Activated CD4-positive, alpha-beta T cell treated with anti-CD3 and anti-CD28 coated beads, Interleukin-2, amount 10 ng/mL, durations not matched to agents 24 days and 14 days (primary cell): ENCODE measurements at regions of chr4 and their contacts with region 1.

Region 1: GRCh38 chr4:147984065-147984777 is 252.3 kb downstream of the ARHGAP10 start:
- DNase-seq: peak; percentile 75
- H3K4me3 Mint-ChIP-seq: no peak overlapping the region
- H3K27ac Mint-ChIP-seq: no peak overlapping the region
- H3K4me1 Mint-ChIP-seq: peaks cover 10% of the 10 kb centered on the region
- H3K27me3 Mint-ChIP-seq: peaks cover 1% of the 10 kb centered on the region

Region 2: DNA sequence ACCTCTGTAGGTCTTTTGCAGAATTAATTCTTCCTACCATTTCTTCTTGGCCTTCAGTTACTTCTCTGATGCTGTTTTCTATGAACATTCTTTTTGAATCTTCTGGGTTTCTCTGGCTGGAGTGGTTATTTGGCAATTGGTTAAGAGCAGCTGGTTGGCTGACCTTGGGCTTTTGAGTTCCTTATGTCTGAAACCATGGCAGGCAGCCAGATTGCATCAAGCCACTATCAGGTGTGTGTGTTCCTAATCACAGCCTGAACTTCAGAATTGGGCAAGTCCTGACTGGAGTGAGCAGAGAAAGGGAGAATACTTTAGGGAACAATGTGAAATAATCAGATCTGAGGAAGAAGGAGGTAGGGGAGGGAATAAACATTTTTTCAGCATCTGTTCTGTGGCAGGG is 162.1 kb before region 1 on chr4:
- intact Hi-C with region 1: no loop called
- DNase-seq: no peak
- H3K4me3 Mint-ChIP-seq: no peak overlapping the region
- H3K27ac Mint-ChIP-seq: no peak overlapping the region
- H3K4me1 Mint-ChIP-seq: peaks cover 2% of the 10 kb centered on the region
- H3K27me3 Mint-ChIP-seq: no peaks in the 10 kb centered on the region

Region 3: GRCh38 chr4:148056869-148057268 is 72.6 kb after region 1 on chr4:
- intact Hi-C with region 1: loop called (anchors 5 kb)
- DNase-seq: peak; percentile 84
- H3K4me3 Mint-ChIP-seq: no peak overlapping the region
- H3K27ac Mint-ChIP-seq: no peak overlapping the region
- H3K4me1 Mint-ChIP-seq: peaks cover 71% of the 10 kb centered on the region
- H3K27me3 Mint-ChIP-seq: no peaks in the 10 kb centered on the region

Region 4: GRCh38 chr4:149264093-149264733 is 1280.0 kb after region 1 on chr4:
- intact Hi-C with region 1: loop called (anchors 10 kb)
- DNase-seq: peak; percentile 65
- H3K4me3 Mint-ChIP-seq: no peak overlapping the region
- H3K27ac Mint-ChIP-seq: no peak overlapping the region
- H3K4me1 Mint-ChIP-seq: no peaks in the 10 kb centered on the region
- H3K27me3 Mint-ChIP-seq: no peaks in the 10 kb centered on the region